Naive thymus-derived CD4-positive, alpha-beta T cell (primary cell): ENCODE measurements at regions of chr3 and their contacts with region 1.

Region 1: DNA sequence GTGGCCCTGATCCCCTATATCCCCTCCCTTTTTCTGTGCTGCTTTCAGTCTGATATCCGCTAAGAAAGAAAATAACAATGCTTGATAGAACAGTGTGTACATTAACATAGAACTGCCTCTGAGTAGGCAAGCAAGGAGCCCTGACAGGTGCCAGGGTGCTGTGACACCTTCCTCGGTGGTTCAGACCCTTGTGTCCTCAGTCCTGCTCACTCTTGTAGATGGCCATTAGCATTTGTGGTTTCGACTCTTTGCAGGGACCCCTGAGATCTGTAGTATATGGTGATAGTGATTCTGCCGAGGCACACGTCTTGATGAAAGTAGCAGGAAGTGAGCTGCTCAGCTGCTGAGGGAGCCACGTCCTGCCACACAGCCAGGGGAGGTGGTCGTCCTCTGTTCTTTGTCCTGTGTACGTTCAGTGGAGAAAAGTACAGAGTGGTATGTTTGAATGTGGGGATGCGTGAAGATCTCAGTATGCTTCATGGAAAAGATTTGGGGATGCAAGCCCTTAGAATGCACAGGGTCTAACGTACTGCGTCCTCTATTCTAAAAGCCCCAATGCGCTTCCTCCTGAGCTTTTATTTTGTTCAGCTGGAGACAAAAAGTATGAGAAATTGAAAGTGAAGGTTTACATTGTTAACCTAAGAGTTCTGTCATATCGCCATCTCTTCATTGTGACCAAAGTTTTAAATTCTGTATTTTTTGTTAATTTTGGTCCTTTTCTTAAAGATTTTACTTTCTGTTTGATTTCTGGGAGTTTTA is 35.4 kb downstream of the PXYLP1 start:
- DNase-seq: peak in 8 of 9 donors; percentile 20 to 82 (median 72)
- ATAC-seq: peak; percentile 85
- H3K4me3 ChIP-seq: peak overlapping the region; percentile 73
- H3K4me3 Mint-ChIP-seq: peak overlapping the region; percentile 84 to 92 (median 88)
- H3K27ac ChIP-seq: peak overlapping the region; percentile 77
- H3K27ac Mint-ChIP-seq: peak overlapping the region; percentile 91 to 99 (median 96)
- H3K4me1 ChIP-seq: peaks cover 0 to 35% of the 10 kb centered on the region in 2 donors
- H3K4me1 Mint-ChIP-seq: peaks cover 32 to 87% (median 39%) of the 10 kb centered on the region in 7 donors
- H3K27me3 ChIP-seq: no peaks in the 10 kb centered on the region
- H3K27me3 Mint-ChIP-seq: no peaks in the 10 kb centered on the region

Region 2: DNA sequence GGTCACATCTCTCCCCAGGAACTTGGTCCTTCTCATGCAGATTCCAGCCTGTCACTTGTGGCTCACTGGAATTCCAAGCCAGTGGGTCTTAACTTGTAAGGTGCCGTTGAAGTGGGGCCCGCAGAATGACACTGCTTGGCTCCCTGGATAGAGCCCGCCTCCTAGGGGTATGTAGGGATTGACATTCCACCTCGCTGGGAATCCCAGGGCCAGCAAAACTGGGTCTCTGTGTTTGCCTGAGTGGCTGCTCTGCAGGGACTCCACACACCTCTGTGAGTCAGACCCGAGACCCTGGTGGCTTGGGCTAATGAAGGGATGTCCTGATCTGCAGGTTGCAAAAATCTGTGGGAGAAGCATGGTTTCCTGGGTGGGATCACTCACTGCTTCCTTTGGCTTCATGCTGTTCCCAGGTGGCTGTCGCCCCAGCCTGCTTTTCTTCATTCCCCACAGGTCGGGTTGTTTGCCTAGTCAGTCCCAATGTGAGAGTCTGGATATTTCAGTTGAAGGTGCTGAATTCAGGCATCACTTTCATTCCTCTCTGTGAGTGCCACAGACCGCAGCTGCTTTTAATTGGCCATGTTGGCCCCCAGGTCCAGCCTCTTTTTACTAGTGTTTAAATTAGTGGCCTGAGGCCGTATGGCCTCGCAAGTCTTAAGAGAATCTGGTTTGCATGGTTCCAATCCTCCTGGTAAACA is 745.1 kb before region 1 on chr3:
- CTCF ChIA-PET with region 1: no interaction called
- POLR2A ChIA-PET with region 1: no interaction called
- intact Hi-C with region 1: no loop called
- DNase-seq: no peak
- ATAC-seq: no peak
- H3K4me3 ChIP-seq: no peak overlapping the region
- H3K4me3 Mint-ChIP-seq: no peak overlapping the region
- H3K27ac ChIP-seq: no peak overlapping the region
- H3K27ac Mint-ChIP-seq: no peak overlapping the region
- H3K4me1 ChIP-seq: no peaks in the 10 kb centered on the region
- H3K4me1 Mint-ChIP-seq: no peaks in the 10 kb centered on the region
- H3K27me3 ChIP-seq: no peaks in the 10 kb centered on the region
- H3K27me3 Mint-ChIP-seq: peaks cover 2 to 55% (median 36%) of the 10 kb centered on the region in 5 donors

Region 3: GRCh38 chr3:140651287-140651686 is 615.7 kb before region 1 on chr3:
- CTCF ChIA-PET with region 1: no interaction called
- POLR2A ChIA-PET with region 1: no interaction called
- intact Hi-C with region 1: no loop called
- DNase-seq: no peak
- ATAC-seq: no peak
- H3K4me3 ChIP-seq: no peak overlapping the region
- H3K4me3 Mint-ChIP-seq: no peak overlapping the region
- H3K27ac ChIP-seq: no peak overlapping the region
- H3K27ac Mint-ChIP-seq: no peak overlapping the region
- H3K4me1 ChIP-seq: no peaks in the 10 kb centered on the region
- H3K4me1 Mint-ChIP-seq: no peaks in the 10 kb centered on the region
- H3K27me3 ChIP-seq: no peaks in the 10 kb centered on the region
- H3K27me3 Mint-ChIP-seq: peaks cover 0 to 44% (median 7%) of the 10 kb centered on the region in 5 donors

Region 4: DNA sequence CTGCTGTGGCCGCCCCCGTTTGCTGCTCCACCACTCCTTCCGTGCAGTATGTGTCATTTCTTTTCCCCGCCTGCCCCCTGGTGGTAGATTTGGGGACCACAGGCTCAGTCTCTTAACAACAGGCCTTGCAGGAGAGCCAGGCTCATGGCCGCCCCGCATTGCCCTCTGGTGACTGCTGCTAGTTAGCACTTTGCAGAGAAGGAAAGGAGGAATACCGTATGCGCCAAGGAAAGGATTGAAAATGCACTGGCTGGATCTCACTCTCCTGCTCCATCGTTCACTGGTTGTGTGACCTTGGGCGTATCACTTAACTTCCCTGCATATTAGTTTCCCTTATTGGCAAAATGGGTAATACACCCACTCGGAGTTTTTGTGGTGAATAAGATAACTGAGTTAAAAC is 74.6 kb before region 1 on chr3:
- CTCF ChIA-PET with region 1: no interaction called
- POLR2A ChIA-PET with region 1: no interaction called
- intact Hi-C with region 1: no loop called
- DNase-seq: peak; percentile 88 to 99 (median 95)
- ATAC-seq: peak; percentile 100
- H3K4me3 ChIP-seq: no peak overlapping the region
- H3K4me3 Mint-ChIP-seq: peak overlapping the region in 3 of 10 donors; percentile 5 to 14 (median 5)
- H3K27ac ChIP-seq: no peak overlapping the region
- H3K27ac Mint-ChIP-seq: peak overlapping the region in 6 of 9 donors; percentile 4 to 75 (median 16)
- H3K4me1 ChIP-seq: no peaks in the 10 kb centered on the region
- H3K4me1 Mint-ChIP-seq: peaks cover 0 to 15% (median 13%) of the 10 kb centered on the region in 7 donors
- H3K27me3 ChIP-seq: peaks cover 0 to 5% of the 10 kb centered on the region in 2 donors
- H3K27me3 Mint-ChIP-seq: peaks cover 0 to 23% (median 6%) of the 10 kb centered on the region in 5 donors

Region 5: DNA sequence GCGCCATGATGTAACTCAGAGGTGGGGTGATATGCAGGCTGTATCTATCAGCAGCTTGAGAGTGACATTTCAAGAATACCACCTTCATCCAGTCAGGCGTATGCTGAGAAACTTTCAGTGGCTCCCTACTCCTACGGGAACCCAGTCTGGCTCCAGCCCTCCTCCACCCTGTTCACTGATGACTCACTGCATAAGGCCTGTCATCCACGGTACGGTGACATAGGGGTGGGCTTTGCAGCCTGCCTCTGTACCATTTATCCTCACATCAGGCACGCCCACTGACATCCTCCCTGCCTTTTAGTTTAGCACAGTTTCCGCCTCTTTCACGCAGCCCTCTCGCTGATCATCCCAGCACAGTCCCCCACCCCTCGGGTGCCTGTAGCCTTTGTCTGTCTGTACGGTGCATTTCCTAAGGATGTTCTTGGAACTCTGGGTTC is 23.7 kb before region 1 on chr3:
- CTCF ChIA-PET with region 1: interaction called, 3 read pairs
- POLR2A ChIA-PET with region 1: interaction called, 516 read pairs
- intact Hi-C with region 1: loop called in 1 of 2 experiments (anchors 1 kb)
- DNase-seq: peak in 8 of 9 donors; percentile 54 to 79 (median 66)
- ATAC-seq: peak; percentile 94
- H3K4me3 ChIP-seq: peak overlapping the region; percentile 15
- H3K4me3 Mint-ChIP-seq: peak overlapping the region; percentile 55 to 83 (median 65)
- H3K27ac ChIP-seq: peak overlapping the region; percentile 62
- H3K27ac Mint-ChIP-seq: peak overlapping the region; percentile 42 to 89 (median 86)
- H3K4me1 ChIP-seq: peaks cover 6 to 34% of the 10 kb centered on the region in 2 donors
- H3K4me1 Mint-ChIP-seq: peaks cover 25 to 85% (median 55%) of the 10 kb centered on the region in 7 donors
- H3K27me3 ChIP-seq: no peaks in the 10 kb centered on the region
- H3K27me3 Mint-ChIP-seq: no peaks in the 10 kb centered on the region

Region 6: DNA sequence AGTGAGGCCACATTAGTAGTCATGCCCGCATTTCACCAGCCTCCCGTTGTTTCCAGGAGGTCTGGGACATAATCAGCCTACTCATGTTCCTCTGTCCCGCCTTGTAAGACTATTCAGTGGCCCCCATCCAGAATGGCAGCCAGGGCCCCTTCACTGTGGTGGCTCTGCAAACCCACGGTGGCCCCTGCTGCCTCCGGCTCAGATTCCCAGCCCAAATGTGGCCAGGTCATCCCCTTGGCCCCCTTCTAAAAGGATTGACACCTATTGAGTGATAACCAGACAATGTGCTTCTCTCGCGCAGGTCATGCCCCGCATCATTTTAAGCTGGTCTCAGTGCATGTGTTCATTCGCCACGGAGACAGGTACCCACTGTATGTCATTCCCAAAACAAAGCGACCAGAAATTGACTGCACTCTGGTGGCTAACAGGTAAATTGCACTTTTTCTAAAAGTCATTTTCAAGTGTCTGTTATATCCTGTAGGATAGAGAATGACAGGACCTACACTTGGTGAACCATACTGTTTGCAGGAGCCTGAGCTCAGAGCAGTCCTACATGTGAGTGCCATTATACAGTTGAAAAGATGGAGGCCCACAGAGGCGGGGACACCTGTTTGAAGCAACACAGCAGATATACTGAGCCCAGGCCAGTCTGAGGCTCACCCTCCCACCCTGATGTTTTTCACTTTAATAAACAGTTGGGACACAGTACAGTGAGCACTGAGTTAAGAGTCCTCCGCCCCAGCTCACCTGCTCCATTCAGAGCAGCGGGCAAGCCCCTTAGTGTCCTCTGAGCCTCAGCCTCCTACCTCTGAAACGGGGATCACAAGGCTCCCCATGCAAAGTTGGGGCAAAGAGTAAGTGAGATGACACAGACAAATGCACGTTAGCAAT is 12.3 kb after region 1 on chr3:
- CTCF ChIA-PET with region 1: interaction called, 31 read pairs
- POLR2A ChIA-PET with region 1: interaction called, 15 read pairs
- intact Hi-C with region 1: loop called in 1 of 2 experiments (anchors 1 kb)
- DNase-seq: peak in 7 of 9 donors; percentile 23 to 58 (median 46)
- ATAC-seq: peak; percentile 82
- H3K4me3 ChIP-seq: no peak overlapping the region
- H3K4me3 Mint-ChIP-seq: peak overlapping the region in 1 of 10 donors; percentile 17
- H3K27ac ChIP-seq: no peak overlapping the region
- H3K27ac Mint-ChIP-seq: peak overlapping the region in 6 of 9 donors; percentile 1 to 83 (median 44)
- H3K4me1 ChIP-seq: peaks cover 10 to 19% of the 10 kb centered on the region in 2 donors
- H3K4me1 Mint-ChIP-seq: peaks cover 14 to 36% (median 21%) of the 10 kb centered on the region in 7 donors
- H3K27me3 ChIP-seq: no peaks in the 10 kb centered on the region
- H3K27me3 Mint-ChIP-seq: no peaks in the 10 kb centered on the region

Region 7: DNA sequence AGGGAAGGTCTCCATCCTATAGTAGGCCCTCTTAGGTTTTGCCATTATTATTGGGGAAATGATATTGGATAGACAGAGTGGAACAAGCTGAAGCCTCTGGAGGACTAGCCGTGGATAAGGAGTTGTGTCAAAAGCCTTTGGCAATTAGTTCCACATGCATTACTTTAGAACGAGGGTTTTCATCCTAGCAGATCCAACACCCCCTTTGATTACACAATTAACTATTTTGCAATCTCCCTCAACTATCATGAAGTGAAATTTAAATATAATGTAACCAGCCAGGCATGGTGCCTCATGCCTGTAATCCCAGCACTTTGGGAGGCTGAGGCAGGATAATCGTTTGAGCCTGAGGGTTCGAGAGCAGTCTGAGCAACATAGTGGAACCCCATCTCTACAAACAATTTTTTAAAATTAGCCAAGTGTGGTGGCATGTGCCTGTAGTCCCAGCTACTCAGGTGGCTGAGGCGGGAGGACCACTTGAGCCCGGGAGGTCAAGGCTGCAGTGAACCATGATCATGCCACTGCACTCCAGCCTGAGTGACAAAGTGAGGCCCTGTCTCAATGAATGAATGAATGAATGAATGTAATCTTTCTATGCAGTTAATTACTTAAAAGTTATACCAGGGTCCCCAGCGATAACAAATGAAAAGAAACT is 21.5 kb after region 1 on chr3:
- CTCF ChIA-PET with region 1: interaction called, 4 read pairs
- POLR2A ChIA-PET with region 1: interaction called, 10 read pairs
- intact Hi-C with region 1: no loop called
- DNase-seq: no peak
- ATAC-seq: no peak
- H3K4me3 ChIP-seq: no peak overlapping the region
- H3K4me3 Mint-ChIP-seq: no peak overlapping the region
- H3K27ac ChIP-seq: no peak overlapping the region
- H3K27ac Mint-ChIP-seq: peak overlapping the region in 1 of 9 donors; percentile 30
- H3K4me1 ChIP-seq: no peaks in the 10 kb centered on the region
- H3K4me1 Mint-ChIP-seq: peaks cover 0 to 24% (median 12%) of the 10 kb centered on the region in 7 donors
- H3K27me3 ChIP-seq: no peaks in the 10 kb centered on the region
- H3K27me3 Mint-ChIP-seq: no peaks in the 10 kb centered on the region

Region 8: DNA sequence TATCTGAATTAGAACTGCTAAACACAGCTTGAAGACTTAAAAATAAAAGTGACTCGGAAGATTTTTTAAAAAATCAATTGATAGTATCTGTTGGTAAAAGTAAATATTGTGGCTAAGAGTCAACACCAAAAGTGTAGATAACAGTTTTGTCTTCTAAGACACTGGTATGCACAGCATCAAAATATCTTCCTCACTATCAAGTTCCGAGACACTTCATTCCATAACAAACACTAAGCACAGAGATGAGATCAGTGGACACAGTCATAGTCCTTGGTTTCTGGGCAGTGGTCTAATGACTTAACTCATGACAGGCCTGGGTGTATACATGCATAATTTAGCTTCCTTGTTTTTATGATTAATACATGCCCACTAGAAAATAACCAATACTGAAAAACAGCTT is 27.9 kb after region 1 on chr3:
- CTCF ChIA-PET with region 1: no interaction called
- POLR2A ChIA-PET with region 1: interaction called, 10 read pairs
- intact Hi-C with region 1: loop called in 1 of 2 experiments (anchors 1 kb)
- DNase-seq: no peak
- ATAC-seq: peak; percentile 42
- H3K4me3 ChIP-seq: peak overlapping the region; percentile 40
- H3K4me3 Mint-ChIP-seq: peak overlapping the region; percentile 51 to 87 (median 78)
- H3K27ac ChIP-seq: peak overlapping the region; percentile 65
- H3K27ac Mint-ChIP-seq: peak overlapping the region; percentile 70 to 99 (median 91)
- H3K4me1 ChIP-seq: peaks cover 0 to 4% of the 10 kb centered on the region in 2 donors
- H3K4me1 Mint-ChIP-seq: peaks cover 6 to 53% (median 39%) of the 10 kb centered on the region in 7 donors
- H3K27me3 ChIP-seq: no peaks in the 10 kb centered on the region
- H3K27me3 Mint-ChIP-seq: peaks cover 0 to 3% (median 0%) of the 10 kb centered on the region in 5 donors